CD4-positive, alpha-beta memory T cell (primary cell): ENCODE measurements at regions of chrX and their contacts with region 1.

Region 1: DNA sequence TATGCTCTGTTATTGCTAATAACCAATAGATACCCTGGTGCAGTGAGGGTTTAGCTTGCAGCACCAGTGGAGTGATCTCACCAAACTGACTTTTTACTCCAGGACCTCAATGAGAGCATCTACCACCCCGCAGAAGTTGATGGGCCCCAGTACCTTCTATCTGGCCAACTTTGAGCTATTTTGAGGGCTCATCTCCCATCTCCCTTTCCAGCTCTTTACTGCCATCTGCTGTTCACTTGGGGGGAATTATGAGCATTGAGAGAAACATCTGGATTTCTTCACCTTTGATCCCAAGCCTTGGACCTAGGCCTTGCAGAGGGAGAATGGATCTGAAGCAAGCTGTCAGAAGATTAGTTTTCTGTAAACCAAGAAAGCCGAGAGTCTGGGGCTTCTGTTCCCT is 143.6 kb downstream of the TMEM164 start:
- DNase-seq: peak; percentile 30 to 49 (median 38)
- H3K4me3 ChIP-seq: no peak overlapping the region
- H3K4me3 Mint-ChIP-seq: no peak overlapping the region
- H3K27ac ChIP-seq: no peak overlapping the region
- H3K27ac Mint-ChIP-seq: peak overlapping the region in 1 of 7 donors; percentile 24
- H3K4me1 ChIP-seq: peaks cover 4% of the 10 kb centered on the region
- H3K4me1 Mint-ChIP-seq: peaks cover 0 to 13% (median 6%) of the 10 kb centered on the region in 4 donors
- H3K27me3 ChIP-seq: no peaks in the 10 kb centered on the region
- H3K27me3 Mint-ChIP-seq: no peaks in the 10 kb centered on the region

Region 2: DNA sequence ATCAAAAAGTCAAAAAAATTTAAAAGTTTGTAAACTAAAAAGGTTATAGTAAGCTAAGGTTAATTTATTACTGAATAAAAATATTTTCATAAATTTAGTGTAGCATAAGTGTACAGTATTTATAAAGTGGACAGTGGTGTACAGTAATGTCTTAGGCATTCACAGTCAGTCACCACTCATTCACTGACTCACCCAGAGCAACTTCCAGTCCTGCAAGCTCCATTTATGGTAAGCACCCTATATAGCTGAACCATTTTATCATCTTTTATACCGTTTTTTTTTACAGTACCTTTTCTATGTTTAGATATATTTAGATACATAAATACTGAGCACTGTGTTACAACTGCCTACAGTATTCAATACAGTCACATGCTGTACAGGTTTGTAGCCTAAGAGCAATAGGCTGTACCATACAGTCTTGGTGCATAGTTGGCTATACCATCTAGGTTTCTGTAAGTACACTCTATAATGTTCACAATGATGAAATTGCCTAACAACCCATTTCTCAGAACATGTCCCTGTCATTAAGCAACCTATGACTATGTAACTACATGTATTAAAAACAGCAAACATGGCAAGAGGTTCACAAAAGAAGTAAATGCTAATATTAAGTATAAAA is 432.1 kb before region 1 on chrX:
- CTCF ChIA-PET with region 1: no interaction called
- POLR2A ChIA-PET with region 1: no interaction called
- intact Hi-C with region 1: loop called (anchors 5 kb)
- DNase-seq: no peak
- H3K4me3 ChIP-seq: no peak overlapping the region
- H3K4me3 Mint-ChIP-seq: no peak overlapping the region
- H3K27ac ChIP-seq: no peak overlapping the region
- H3K27ac Mint-ChIP-seq: no peak overlapping the region
- H3K4me1 ChIP-seq: peaks cover 4% of the 10 kb centered on the region
- H3K4me1 Mint-ChIP-seq: peaks cover 16 to 35% (median 25%) of the 10 kb centered on the region in 4 donors
- H3K27me3 ChIP-seq: no peaks in the 10 kb centered on the region
- H3K27me3 Mint-ChIP-seq: no peaks in the 10 kb centered on the region

Region 3: GRCh38 chrX:109911046-109911445 is 235.5 kb before region 1 on chrX:
- CTCF ChIA-PET with region 1: interaction called, 7 read pairs
- POLR2A ChIA-PET with region 1: no interaction called
- intact Hi-C with region 1: loop called (anchors 5 kb)
- DNase-seq: no peak
- H3K4me3 ChIP-seq: no peak overlapping the region
- H3K4me3 Mint-ChIP-seq: no peak overlapping the region
- H3K27ac ChIP-seq: no peak overlapping the region
- H3K27ac Mint-ChIP-seq: peak overlapping the region in 1 of 7 donors; percentile 26
- H3K4me1 ChIP-seq: no peaks in the 10 kb centered on the region
- H3K4me1 Mint-ChIP-seq: no peaks in the 10 kb centered on the region
- H3K27me3 ChIP-seq: no peaks in the 10 kb centered on the region
- H3K27me3 Mint-ChIP-seq: peaks cover 2 to 3% of the 10 kb centered on the region in 2 donors

Region 4: GRCh38 chrX:110103344-110103743 is 43.2 kb before region 1 on chrX:
- CTCF ChIA-PET with region 1: no interaction called
- POLR2A ChIA-PET with region 1: no interaction called
- intact Hi-C with region 1: no loop called
- DNase-seq: no peak
- H3K4me3 ChIP-seq: no peak overlapping the region
- H3K4me3 Mint-ChIP-seq: no peak overlapping the region
- H3K27ac ChIP-seq: no peak overlapping the region
- H3K27ac Mint-ChIP-seq: peak overlapping the region in 1 of 7 donors; percentile 24
- H3K4me1 ChIP-seq: no peaks in the 10 kb centered on the region
- H3K4me1 Mint-ChIP-seq: peaks cover 0 to 2% (median 0%) of the 10 kb centered on the region in 4 donors
- H3K27me3 ChIP-seq: no peaks in the 10 kb centered on the region
- H3K27me3 Mint-ChIP-seq: no peaks in the 10 kb centered on the region

Region 5: GRCh38 chrX:110402479-110403230 is 256.1 kb after region 1 on chrX:
- CTCF ChIA-PET with region 1: interaction called, 434 read pairs
- POLR2A ChIA-PET with region 1: no interaction called
- intact Hi-C with region 1: no loop called
- DNase-seq: no peak
- H3K4me3 ChIP-seq: no peak overlapping the region
- H3K4me3 Mint-ChIP-seq: no peak overlapping the region
- H3K27ac ChIP-seq: no peak overlapping the region
- H3K27ac Mint-ChIP-seq: peak overlapping the region in 1 of 7 donors; percentile 43
- H3K4me1 ChIP-seq: no peaks in the 10 kb centered on the region
- H3K4me1 Mint-ChIP-seq: peaks cover 0 to 1% (median 0%) of the 10 kb centered on the region in 4 donors
- H3K27me3 ChIP-seq: no peaks in the 10 kb centered on the region
- H3K27me3 Mint-ChIP-seq: peaks cover 0 to 6% of the 10 kb centered on the region in 2 donors

Region 6: DNA sequence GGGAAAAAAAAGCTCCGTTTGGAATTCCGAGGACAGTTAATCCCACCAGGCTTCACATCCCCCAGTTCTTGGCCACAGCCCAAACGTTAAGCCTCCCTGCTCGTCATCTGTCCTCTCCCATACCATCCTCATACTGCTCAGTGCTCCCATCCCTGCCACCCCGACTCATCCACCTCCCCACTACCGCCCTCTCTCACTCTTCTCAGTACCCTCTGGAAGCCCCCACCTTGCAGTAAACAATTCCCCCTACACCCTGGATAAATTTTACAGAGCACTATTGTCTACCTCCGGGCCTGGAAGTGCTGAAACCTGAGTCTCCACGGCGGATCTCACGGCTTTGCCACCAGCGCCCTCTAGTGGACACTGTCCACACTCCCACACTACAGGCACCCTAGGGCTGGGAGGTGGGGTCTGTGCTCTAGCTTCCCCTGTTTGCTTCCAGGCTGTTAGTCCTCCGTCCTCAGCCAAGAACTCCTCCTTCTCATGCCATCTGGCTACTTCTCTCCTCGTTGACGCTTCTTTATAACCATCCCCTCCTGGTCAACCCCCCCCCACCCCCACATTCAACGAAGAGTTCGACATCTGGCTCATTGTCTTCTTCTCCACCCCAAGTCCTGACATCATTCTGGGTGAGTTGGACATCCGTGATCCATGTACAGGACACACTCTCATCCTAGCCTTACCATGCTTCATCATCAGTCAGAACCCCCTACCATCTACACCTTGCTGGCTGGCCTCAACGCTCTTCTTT is 266.6 kb after region 1 on chrX:
- CTCF ChIA-PET with region 1: interaction called, 434 read pairs
- POLR2A ChIA-PET with region 1: no interaction called
- intact Hi-C with region 1: loop called (anchors 1 kb)
- DNase-seq: peak; percentile 53 to 68 (median 63)
- H3K4me3 ChIP-seq: no peak overlapping the region
- H3K4me3 Mint-ChIP-seq: no peak overlapping the region
- H3K27ac ChIP-seq: no peak overlapping the region
- H3K27ac Mint-ChIP-seq: no peak overlapping the region
- H3K4me1 ChIP-seq: no peaks in the 10 kb centered on the region
- H3K4me1 Mint-ChIP-seq: peaks cover 0 to 4% (median 2%) of the 10 kb centered on the region in 4 donors
- H3K27me3 ChIP-seq: no peaks in the 10 kb centered on the region
- H3K27me3 Mint-ChIP-seq: peaks cover 1 to 3% of the 10 kb centered on the region in 2 donors

Region 7: GRCh38 chrX:110847334-110847733 is 700.8 kb after region 1 on chrX:
- CTCF ChIA-PET with region 1: no interaction called
- POLR2A ChIA-PET with region 1: no interaction called
- intact Hi-C with region 1: loop called (anchors 5 kb)
- DNase-seq: peak in 4 of 5 donors; percentile 38 to 52 (median 51)
- H3K4me3 ChIP-seq: no peak overlapping the region
- H3K4me3 Mint-ChIP-seq: no peak overlapping the region
- H3K27ac ChIP-seq: no peak overlapping the region
- H3K27ac Mint-ChIP-seq: no peak overlapping the region
- H3K4me1 ChIP-seq: no peaks in the 10 kb centered on the region
- H3K4me1 Mint-ChIP-seq: peaks cover 0 to 3% (median 0%) of the 10 kb centered on the region in 4 donors
- H3K27me3 ChIP-seq: no peaks in the 10 kb centered on the region
- H3K27me3 Mint-ChIP-seq: no peaks in the 10 kb centered on the region